Calu3 (cell line): ENCODE measurements at regions of chr3 and their contacts with region 1.

Region 1: GRCh38 chr3:169149349-169149890 is 514.1 kb downstream of the MECOM start:
- DNase-seq: peak; percentile 97
- H3K4me3 Mint-ChIP-seq: peak overlapping the region; percentile 97
- H3K27ac Mint-ChIP-seq: peak overlapping the region; percentile 99
- H3K4me1 Mint-ChIP-seq: peaks cover 20% of the 10 kb centered on the region
- H3K27me3 Mint-ChIP-seq: no peaks in the 10 kb centered on the region
- CTCF ChIP-seq: peak; percentile 98

Region 2: DNA sequence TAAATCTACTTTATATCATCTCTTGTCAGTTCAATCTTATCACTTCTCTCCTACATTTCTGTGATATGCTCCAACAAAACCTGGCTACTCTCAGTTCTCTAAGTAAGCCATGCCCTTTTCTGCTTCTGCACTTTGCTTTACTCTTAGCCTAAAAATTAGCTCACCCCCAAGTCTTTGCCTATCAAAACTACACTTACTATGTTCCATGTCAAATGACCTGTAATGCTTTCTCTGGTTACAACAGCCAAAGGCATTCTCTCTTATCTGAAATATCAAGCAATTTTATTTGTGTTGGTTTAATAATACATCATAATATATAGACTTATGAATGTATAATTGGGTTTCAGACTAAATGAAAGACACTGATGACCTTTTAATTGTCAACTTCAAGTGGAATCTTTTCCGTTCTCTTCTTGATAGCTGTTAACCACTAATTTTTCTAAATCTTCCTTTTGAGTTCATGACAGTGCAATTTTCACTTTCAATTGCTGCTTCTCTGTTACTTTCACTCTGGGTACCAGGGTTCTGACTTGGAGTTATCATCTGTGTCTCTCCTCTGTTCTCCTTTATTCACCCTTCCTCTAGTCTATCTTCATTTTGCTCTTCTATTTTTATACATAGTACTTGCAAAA is 434.7 kb before region 1 on chr3:
- CTCF ChIA-PET with region 1: no interaction called
- intact Hi-C with region 1: no loop called
- DNase-seq: no peak
- H3K4me3 Mint-ChIP-seq: no peak overlapping the region
- H3K27ac Mint-ChIP-seq: no peak overlapping the region
- H3K4me1 Mint-ChIP-seq: no peaks in the 10 kb centered on the region
- H3K27me3 Mint-ChIP-seq: no peaks in the 10 kb centered on the region
- CTCF ChIP-seq: no peak

Region 3: DNA sequence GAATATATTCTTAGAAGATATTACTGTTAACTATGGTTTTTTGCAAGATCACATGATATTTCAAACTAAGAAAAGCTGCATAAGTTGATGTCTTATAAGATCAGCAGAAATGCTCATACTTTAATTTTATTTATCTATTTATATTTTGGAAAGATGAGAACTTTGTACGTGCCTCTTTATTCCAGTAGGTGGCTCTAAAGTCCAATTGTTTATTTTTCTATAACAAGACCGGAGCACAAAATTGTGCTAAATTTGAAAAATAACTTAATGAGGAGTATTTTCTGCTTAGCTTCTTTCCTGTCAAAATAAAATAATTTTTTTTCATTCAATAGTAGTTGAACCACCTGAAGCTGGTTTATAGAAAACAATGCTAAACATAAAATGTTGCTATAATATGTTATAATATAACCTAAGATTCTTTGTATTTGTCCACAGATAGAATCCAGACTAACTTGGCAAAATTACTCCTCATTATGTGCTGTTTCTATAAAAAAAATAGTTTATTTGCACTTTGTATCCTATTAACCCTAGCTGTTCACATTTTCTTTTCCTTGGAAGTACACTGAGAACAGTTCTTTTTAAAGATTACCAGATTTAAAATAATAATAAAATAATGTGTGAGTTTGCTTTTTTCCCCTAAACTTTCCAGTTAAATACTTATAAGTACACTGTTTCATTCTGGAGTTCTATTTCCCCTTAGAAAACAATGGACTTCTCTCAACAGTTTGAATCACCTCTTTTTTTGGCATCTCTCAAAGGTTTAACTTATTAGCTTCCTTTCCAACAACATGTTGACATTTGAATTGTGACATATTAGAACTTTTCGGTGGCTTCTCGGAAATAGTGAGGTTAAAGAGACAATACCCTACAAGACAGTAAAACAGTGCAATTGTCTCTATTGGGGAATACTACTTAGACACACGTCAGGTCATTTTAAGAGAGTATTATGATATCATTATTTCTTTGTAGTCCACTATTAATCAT is 15.9 kb before region 1 on chr3:
- CTCF ChIA-PET with region 1: interaction called, 30 read pairs
- intact Hi-C with region 1: loop called (anchors 2 kb)
- DNase-seq: no peak
- H3K4me3 Mint-ChIP-seq: peak overlapping the region; percentile 33
- H3K27ac Mint-ChIP-seq: peak overlapping the region; percentile 75
- H3K4me1 Mint-ChIP-seq: peaks cover 75% of the 10 kb centered on the region
- H3K27me3 Mint-ChIP-seq: no peaks in the 10 kb centered on the region
- CTCF ChIP-seq: peak; percentile 63

Region 4: DNA sequence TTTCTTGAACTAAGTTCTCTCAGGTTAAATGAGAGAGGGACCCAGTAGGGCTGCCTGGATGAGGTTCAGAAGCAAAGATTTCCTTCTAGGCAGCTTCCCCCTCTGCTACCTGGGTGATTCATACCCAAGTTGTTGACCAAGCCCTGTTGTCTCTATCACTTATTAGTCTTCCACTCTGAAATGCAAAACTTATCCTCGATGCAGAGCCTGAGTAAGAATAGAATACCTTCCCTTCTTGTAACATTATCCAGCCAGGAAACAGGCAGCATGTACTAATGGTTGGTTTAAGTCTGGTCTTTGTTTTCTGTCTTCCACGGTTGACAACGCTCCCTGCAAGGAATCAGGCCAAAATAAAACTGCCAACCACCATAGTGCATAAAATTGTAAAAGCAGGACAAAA is 136.8 kb after region 1 on chr3:
- CTCF ChIA-PET with region 1: interaction called, 10 read pairs
- intact Hi-C with region 1: loop called (anchors 2 kb)
- DNase-seq: peak; percentile 66
- H3K4me3 Mint-ChIP-seq: peak overlapping the region; percentile 68
- H3K27ac Mint-ChIP-seq: peak overlapping the region; percentile 98
- H3K4me1 Mint-ChIP-seq: peaks cover 54% of the 10 kb centered on the region
- H3K27me3 Mint-ChIP-seq: no peaks in the 10 kb centered on the region
- CTCF ChIP-seq: no peak

Region 5: GRCh38 chr3:169604568-169604967 is 455.1 kb after region 1 on chr3:
- CTCF ChIA-PET with region 1: interaction called, 10 read pairs
- intact Hi-C with region 1: no loop called
- DNase-seq: peak; percentile 17
- H3K4me3 Mint-ChIP-seq: no peak overlapping the region
- H3K27ac Mint-ChIP-seq: no peak overlapping the region
- H3K4me1 Mint-ChIP-seq: peaks cover 42% of the 10 kb centered on the region
- H3K27me3 Mint-ChIP-seq: no peaks in the 10 kb centered on the region
- CTCF ChIP-seq: no peak

Region 6: DNA sequence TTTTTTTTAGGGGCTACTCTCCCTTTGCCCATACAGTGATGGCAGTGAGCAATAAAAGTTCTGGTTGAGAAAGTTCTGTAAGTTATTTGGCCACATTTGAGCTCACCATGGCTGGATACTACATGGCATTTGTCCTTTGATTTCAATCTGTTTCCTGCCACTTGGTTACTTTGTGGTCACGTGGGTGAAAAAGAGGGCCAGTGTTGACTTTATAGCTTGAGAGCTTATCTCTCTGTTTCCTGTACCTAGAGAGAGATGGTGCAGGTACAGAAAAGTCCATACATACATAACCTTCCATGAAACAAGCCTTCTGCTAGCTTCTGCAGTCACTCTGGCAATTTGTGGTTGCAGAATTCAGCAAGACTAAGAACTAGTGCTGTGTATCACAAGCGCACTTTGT is 537.5 kb after region 1 on chr3:
- CTCF ChIA-PET with region 1: interaction called, 10 read pairs
- intact Hi-C with region 1: no loop called
- DNase-seq: no peak
- H3K4me3 Mint-ChIP-seq: no peak overlapping the region
- H3K27ac Mint-ChIP-seq: no peak overlapping the region
- H3K4me1 Mint-ChIP-seq: no peaks in the 10 kb centered on the region
- H3K27me3 Mint-ChIP-seq: no peaks in the 10 kb centered on the region
- CTCF ChIP-seq: no peak